Endothelial cell of umbilical vein (primary cell): ENCODE measurements at regions of chr11 and their contacts with region 1.

Region 1: DNA sequence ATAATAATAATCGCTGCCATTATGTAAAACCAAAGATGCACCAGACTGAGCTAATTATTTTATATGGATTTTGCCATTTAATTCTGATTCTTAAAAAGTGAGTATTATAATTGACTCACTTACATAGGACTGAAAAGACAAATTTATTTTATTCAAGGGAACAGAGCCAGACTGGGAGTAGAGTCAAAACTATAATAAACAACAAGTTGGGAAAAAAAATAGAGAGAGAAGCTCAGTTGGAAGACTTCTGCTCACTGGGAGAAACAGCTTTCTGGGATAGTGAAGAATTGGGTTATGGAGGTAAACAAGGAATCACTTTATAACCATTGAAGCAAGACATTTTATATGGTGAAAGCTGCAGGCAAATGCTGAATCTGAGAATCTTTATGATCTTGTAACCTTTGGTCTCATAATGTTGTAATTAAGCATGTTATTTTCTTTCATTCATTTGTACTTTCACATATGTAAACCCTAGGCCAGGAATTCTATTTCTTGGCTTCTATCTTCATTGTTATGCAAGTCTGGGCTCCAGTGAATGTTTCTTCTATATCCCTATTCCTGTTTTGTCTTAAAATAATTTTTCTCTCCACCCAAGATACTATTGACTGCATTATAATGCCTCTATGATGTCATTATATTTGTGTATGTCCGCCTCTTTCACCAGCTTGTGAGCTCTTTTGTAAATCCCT is 725.3 kb upstream of the CCDC179 start:
- DNase-seq: no peak
- H3K4me3 ChIP-seq: no peak overlapping the region
- H3K27ac ChIP-seq: no peak overlapping the region
- H3K4me1 ChIP-seq: no peaks in the 10 kb centered on the region
- H3K27me3 ChIP-seq: no peaks in the 10 kb centered on the region
- CTCF ChIP-seq: no peak
- POLR2A ChIP-seq: no peak

Region 2: GRCh38 chr11:23569547-23569946 is 16.0 kb before region 1 on chr11:
- CTCF ChIA-PET with region 1: interaction called, 10 read pairs
- POLR2A ChIA-PET with region 1: no interaction called
- dilution Hi-C with region 1: no loop called
- intact Hi-C with region 1: no loop called
- DNase-seq: peak; percentile 50
- H3K4me3 ChIP-seq: no peak overlapping the region
- H3K27ac ChIP-seq: peak overlapping the region; percentile 8
- H3K4me1 ChIP-seq: peaks cover 18% of the 10 kb centered on the region
- H3K27me3 ChIP-seq: no peaks in the 10 kb centered on the region
- CTCF ChIP-seq: no peak
- POLR2A ChIP-seq: no peak